Naive thymus-derived CD4-positive, alpha-beta T cell (primary cell): ENCODE measurements at regions of chr4 and their contacts with region 1.

Region 1: DNA sequence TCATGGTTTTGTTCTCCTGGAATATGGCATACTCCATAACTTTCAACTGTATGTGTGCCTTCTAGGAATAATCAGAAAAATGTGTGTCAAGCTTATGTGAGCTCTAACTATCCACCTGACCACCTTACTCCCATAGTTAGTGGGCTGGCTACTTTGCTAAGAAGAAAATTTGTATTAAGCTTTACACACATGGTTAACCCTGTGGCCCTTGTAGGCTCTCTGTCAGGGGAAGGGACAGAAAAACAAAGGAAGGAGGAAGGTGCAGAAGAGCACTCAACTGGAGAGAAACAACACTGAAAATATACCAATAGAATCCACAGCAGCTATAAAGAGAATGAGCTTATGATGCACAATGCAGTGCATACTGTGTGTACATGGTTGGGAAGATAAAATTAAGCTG is 84.6 kb downstream of the PPP3CA start:
- DNase-seq: no peak
- ATAC-seq: no peak
- H3K4me3 ChIP-seq: no peak overlapping the region
- H3K4me3 Mint-ChIP-seq: no peak overlapping the region
- H3K27ac ChIP-seq: no peak overlapping the region
- H3K27ac Mint-ChIP-seq: peak overlapping the region in 1 of 9 donors; percentile 19
- H3K4me1 ChIP-seq: peaks cover 0 to 6% of the 10 kb centered on the region in 2 donors
- H3K4me1 Mint-ChIP-seq: peaks cover 18 to 69% (median 39%) of the 10 kb centered on the region in 7 donors
- H3K27me3 ChIP-seq: no peaks in the 10 kb centered on the region
- H3K27me3 Mint-ChIP-seq: peaks cover 0 to 16% (median 0%) of the 10 kb centered on the region in 5 donors

Region 2: DNA sequence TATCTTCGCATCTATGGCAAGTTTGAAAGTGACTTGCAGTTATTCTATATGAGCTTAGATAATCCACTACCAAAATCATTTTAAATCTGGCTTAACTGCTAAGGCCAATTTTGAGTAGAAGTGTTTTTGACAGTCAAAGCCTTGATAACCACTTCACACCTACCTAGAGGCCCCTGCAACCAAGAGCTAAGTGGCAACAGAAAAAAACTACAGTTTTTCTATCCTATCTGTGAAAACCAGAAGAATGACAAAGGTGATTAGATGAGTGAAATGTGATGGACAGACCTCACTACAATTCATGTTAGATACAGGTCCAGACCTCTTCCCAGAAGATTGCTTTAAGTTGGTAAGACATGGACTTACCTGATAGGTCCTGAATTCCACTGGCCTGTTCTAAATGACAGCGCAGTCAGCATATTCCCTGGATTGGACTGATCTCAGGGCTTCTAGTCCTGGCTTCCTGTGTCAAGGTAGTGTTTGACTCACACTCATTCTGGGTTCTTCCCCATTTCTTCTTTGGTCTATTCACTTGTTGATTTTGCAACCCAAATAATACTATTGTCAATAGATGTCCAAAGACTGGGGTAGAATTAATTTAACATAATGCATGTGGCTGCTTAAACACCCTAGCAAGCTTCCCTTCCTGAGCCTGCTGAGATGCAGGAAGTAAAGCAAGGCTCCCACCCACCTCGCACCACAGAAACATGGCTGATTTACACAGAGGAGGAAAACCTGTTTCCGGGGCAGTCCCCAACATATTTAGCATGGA is 19.6 kb after region 1 on chr4:
- CTCF ChIA-PET with region 1: interaction called, 3 read pairs
- POLR2A ChIA-PET with region 1: no interaction called
- intact Hi-C with region 1: loop called in 1 of 2 experiments (anchors 2 kb)
- DNase-seq: peak in 5 of 9 donors; percentile 5 to 45 (median 18)
- ATAC-seq: peak; percentile 55
- H3K4me3 ChIP-seq: no peak overlapping the region
- H3K4me3 Mint-ChIP-seq: peak overlapping the region in 4 of 10 donors; percentile 23 to 70 (median 58)
- H3K27ac ChIP-seq: no peak overlapping the region
- H3K27ac Mint-ChIP-seq: no peak overlapping the region
- H3K4me1 ChIP-seq: peaks cover 9 to 14% of the 10 kb centered on the region in 2 donors
- H3K4me1 Mint-ChIP-seq: peaks cover 24 to 78% (median 61%) of the 10 kb centered on the region in 7 donors
- H3K27me3 ChIP-seq: no peaks in the 10 kb centered on the region
- H3K27me3 Mint-ChIP-seq: no peaks in the 10 kb centered on the region